Activated CD8-positive, alpha-beta T cell treated with anti-CD3 and anti-CD28 coated beads, Interleukin-2, amount 10 ng/mL, durations not matched to agents 7 days and 5 days (primary cell): ENCODE measurements at regions of chr10 and their contacts with region 1.

Region 1: GRCh38 chr10:102384053-102384452 is 11.5 kb upstream of the NFKB2 start:
- DNase-seq: no peak
- ATAC-seq: no peak
- H3K4me3 Mint-ChIP-seq: no peak overlapping the region
- H3K27ac Mint-ChIP-seq: no peak overlapping the region
- H3K4me1 Mint-ChIP-seq: no peaks in the 10 kb centered on the region
- H3K27me3 Mint-ChIP-seq: no peaks in the 10 kb centered on the region

Region 2: DNA sequence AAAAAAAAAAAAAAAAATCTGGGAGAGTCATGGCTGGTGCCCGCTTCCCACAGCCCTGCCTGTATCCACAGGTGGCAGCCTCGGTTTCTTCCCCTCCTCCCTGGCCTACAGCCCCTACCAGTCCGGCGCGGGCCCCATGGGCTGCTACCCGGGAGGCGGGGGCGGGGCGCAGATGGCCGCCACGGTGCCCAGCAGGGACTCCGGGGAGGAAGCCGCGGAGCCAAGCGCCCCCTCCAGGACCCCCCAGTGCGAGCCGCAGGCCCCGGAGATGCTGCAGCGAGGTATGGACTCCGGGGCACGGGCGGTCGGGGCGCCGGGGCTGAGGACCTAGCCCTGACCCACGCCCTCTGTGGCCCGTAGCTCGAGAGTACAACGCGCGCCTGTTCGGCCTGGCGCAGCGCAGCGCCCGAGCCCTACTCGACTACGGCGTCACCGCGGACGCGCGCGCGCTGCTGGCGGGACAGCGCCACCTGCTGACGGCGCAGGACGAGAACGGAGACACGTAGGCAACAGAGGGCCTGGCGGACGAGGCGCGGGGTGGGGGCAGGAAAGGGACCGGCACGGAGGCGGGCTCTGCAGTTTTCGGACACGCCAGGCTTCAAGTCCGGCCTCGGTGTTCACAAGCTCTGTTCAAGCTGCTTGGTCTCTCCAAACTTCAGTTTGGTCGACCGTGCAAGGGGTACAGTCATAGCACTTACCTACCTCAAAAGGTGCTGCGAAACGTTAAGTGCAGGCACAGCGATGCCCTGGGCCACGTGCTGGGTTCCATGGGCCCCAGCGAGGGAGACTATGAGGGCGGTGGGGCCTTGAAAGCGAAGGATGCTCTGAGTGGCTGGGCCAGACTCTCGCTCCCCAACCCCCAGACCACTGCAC is 15.4 kb after region 1 on chr10:
- CTCF ChIA-PET with region 1: interaction called, 34 read pairs
- POLR2A ChIA-PET with region 1: interaction called, 23 read pairs
- DNase-seq: peak; percentile 92
- ATAC-seq: peak; percentile 63
- H3K4me3 Mint-ChIP-seq: peak overlapping the region; percentile 56
- H3K27ac Mint-ChIP-seq: peak overlapping the region; percentile 78
- H3K4me1 Mint-ChIP-seq: peaks cover 39% of the 10 kb centered on the region
- H3K27me3 Mint-ChIP-seq: no peaks in the 10 kb centered on the region

Region 3: DNA sequence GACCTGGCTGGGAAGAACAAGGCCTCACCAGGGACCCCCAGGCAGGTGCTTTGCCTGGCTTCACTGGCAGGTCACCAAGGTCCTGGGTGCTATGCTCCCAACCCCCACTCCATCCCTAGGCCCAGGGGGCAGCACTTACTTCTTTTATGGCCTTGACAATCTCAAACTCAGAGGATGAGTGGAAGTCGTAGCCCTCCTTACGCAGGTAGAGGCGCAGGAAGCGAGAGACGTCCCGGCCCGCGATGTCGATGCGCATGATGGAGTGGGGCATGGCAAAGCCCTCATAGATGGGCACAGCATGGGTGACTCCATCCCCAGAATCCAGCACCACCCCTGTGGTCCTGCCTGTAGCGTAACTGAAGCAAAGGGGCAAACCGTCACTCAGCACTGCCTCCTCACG is 100.0 kb after region 1 on chr10:
- CTCF ChIA-PET with region 1: interaction called, 12 read pairs
- POLR2A ChIA-PET with region 1: no interaction called
- DNase-seq: no peak
- ATAC-seq: no peak
- H3K4me3 Mint-ChIP-seq: no peak overlapping the region
- H3K27ac Mint-ChIP-seq: no peak overlapping the region
- H3K4me1 Mint-ChIP-seq: peaks cover 2% of the 10 kb centered on the region
- H3K27me3 Mint-ChIP-seq: no peaks in the 10 kb centered on the region